B cell (primary cell): ENCODE measurements at regions of chr20 and their contacts with region 1.

Region 1: GRCh38 chr20:266596-267562 is 9.4 kb downstream of the DEFB132 start:
- DNase-seq: peak; percentile 91
- ATAC-seq: peak; percentile 100
- H3K4me3 ChIP-seq: peak overlapping the region; percentile 33 to 63 (median 54)
- H3K4me3 Mint-ChIP-seq: peak overlapping the region; percentile 85
- H3K27ac ChIP-seq: no peak overlapping the region
- H3K27ac Mint-ChIP-seq: no peak overlapping the region
- H3K4me1 ChIP-seq: peaks cover 3 to 8% of the 10 kb centered on the region in 2 donors
- H3K4me1 Mint-ChIP-seq: peaks cover 9% of the 10 kb centered on the region
- H3K27me3 ChIP-seq: peaks cover 0 to 2% (median 1%) of the 10 kb centered on the region in 4 experiments
- H3K27me3 Mint-ChIP-seq: peaks cover 9% of the 10 kb centered on the region
- CTCF ChIP-seq: peak; percentile 95

Region 2: DNA sequence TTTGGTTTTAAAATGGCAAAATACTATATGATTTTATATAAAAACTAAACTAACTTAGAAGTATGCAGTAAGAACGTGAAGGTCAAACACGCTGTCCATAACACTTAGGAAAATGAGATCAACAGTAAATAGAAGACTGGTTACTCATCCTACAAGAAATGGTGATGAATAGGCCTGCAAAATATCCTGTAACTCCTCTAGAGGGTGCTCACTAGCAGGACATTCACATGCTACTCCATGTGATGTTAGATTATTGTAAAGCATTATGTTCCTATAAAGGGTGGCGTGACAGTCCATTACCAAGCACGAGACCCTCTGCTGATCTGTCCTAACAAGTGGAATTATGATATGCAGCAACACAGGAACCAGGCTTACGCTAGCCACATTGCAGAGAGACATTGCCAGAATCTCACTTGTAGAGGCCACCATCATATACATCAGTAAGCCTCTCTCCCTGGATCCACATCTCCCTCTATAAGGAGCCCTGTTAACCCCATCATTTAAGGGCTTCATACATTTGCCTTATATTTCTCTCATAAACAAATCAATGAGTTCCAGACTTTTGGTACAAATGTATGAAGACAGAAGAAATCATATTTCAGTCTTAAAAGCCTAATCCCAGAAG is 57.8 kb before region 1 on chr20:
- CTCF ChIA-PET with region 1: interaction called, 18 read pairs
- POLR2A ChIA-PET with region 1: no interaction called
- intact Hi-C with region 1: loop called (anchors 1 kb)
- DNase-seq: peak; percentile 66
- ATAC-seq: peak; percentile 56
- H3K4me3 ChIP-seq: no peak overlapping the region
- H3K4me3 Mint-ChIP-seq: no peak overlapping the region
- H3K27ac ChIP-seq: no peak overlapping the region
- H3K27ac Mint-ChIP-seq: no peak overlapping the region
- H3K4me1 ChIP-seq: no peaks in the 10 kb centered on the region
- H3K4me1 Mint-ChIP-seq: no peaks in the 10 kb centered on the region
- H3K27me3 ChIP-seq: no peaks in the 10 kb centered on the region
- H3K27me3 Mint-ChIP-seq: peaks cover 22% of the 10 kb centered on the region
- CTCF ChIP-seq: peak; percentile 74

Region 3: DNA sequence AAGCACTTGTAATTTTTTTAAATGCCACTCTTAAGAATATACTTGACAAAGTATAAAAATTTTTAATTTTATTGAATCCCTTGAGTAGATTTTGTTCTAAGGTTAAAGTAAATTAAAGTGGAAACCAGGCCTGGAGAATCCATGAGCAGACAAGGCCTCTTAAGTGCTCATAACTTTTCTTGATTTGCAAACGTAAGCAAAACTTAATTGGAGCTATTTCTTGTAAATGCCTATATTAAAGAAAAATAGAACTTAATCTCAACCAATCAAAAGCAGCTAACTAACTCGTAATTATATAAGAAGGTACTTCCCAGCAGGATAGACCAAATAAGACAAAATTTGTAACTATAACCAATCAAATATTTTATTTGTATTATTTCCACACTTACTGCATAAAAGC is 52.5 kb before region 1 on chr20:
- CTCF ChIA-PET with region 1: interaction called, 18 read pairs
- POLR2A ChIA-PET with region 1: no interaction called
- intact Hi-C with region 1: loop called (anchors 1 kb)
- DNase-seq: no peak
- ATAC-seq: no peak
- H3K4me3 ChIP-seq: no peak overlapping the region
- H3K4me3 Mint-ChIP-seq: no peak overlapping the region
- H3K27ac ChIP-seq: no peak overlapping the region
- H3K27ac Mint-ChIP-seq: no peak overlapping the region
- H3K4me1 ChIP-seq: no peaks in the 10 kb centered on the region
- H3K4me1 Mint-ChIP-seq: no peaks in the 10 kb centered on the region
- H3K27me3 ChIP-seq: peaks cover 0 to 4% (median 2%) of the 10 kb centered on the region in 4 experiments
- H3K27me3 Mint-ChIP-seq: peaks cover 20% of the 10 kb centered on the region
- CTCF ChIP-seq: no peak

Region 4: DNA sequence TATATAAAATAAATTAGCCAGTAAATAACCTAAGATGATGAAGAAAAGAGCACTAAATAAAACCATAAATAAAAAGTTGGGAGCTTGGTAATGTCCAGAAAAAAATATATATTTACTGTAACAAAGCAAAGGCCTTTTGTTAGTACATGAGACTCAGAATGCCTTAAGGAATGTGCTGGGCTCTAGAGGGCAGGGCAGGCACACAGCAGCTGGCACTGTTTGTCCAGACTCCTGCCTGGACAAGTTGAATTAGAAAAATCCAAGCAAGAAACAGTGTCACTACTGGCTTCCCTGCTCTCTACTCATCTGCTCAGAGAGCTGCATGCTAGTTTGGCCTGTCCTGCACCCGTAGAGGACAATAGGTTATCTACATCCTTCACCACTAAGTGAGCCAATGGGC is 31.0 kb before region 1 on chr20:
- CTCF ChIA-PET with region 1: interaction called, 11 read pairs
- POLR2A ChIA-PET with region 1: no interaction called
- intact Hi-C with region 1: no loop called
- DNase-seq: no peak
- ATAC-seq: no peak
- H3K4me3 ChIP-seq: no peak overlapping the region
- H3K4me3 Mint-ChIP-seq: no peak overlapping the region
- H3K27ac ChIP-seq: no peak overlapping the region
- H3K27ac Mint-ChIP-seq: no peak overlapping the region
- H3K4me1 ChIP-seq: peaks cover 15 to 16% of the 10 kb centered on the region in 2 donors
- H3K4me1 Mint-ChIP-seq: peaks cover 25% of the 10 kb centered on the region
- H3K27me3 ChIP-seq: no peaks in the 10 kb centered on the region
- H3K27me3 Mint-ChIP-seq: peaks cover 11% of the 10 kb centered on the region
- CTCF ChIP-seq: no peak

Region 5: GRCh38 chr20:290084-290831 is 23.4 kb after region 1 on chr20 and contains the start of gene C20orf96:
- CTCF ChIA-PET with region 1: interaction called, 9 read pairs
- POLR2A ChIA-PET with region 1: no interaction called
- intact Hi-C with region 1: loop called (anchors 1 kb)
- DNase-seq: peak; percentile 93
- ATAC-seq: peak; percentile 98
- H3K4me3 ChIP-seq: peak within 1 kb of the TSS; percentile 48 to 83 (median 69)
- H3K4me3 Mint-ChIP-seq: no peak within 1 kb of the TSS
- H3K27ac ChIP-seq: peak within 1 kb of the TSS in 1 of 2 donors; percentile 57
- H3K27ac Mint-ChIP-seq: no peak within 1 kb of the TSS
- H3K4me1 ChIP-seq: peaks cover 18 to 22% of the 10 kb centered on the region in 2 donors
- H3K4me1 Mint-ChIP-seq: peaks cover 6% of the 10 kb centered on the region
- H3K27me3 ChIP-seq: no peaks in the 10 kb centered on the region
- H3K27me3 Mint-ChIP-seq: no peaks in the 10 kb centered on the region
- CTCF ChIP-seq: peak; percentile 45
- total RNA-seq, gene C20orf96: 7.5 TPM in 2 replicates